Head of caudate nucleus (tissue), 42 donors: ENCODE measurements at regions of chr9 and their contacts with region 1.

Region 1: DNA sequence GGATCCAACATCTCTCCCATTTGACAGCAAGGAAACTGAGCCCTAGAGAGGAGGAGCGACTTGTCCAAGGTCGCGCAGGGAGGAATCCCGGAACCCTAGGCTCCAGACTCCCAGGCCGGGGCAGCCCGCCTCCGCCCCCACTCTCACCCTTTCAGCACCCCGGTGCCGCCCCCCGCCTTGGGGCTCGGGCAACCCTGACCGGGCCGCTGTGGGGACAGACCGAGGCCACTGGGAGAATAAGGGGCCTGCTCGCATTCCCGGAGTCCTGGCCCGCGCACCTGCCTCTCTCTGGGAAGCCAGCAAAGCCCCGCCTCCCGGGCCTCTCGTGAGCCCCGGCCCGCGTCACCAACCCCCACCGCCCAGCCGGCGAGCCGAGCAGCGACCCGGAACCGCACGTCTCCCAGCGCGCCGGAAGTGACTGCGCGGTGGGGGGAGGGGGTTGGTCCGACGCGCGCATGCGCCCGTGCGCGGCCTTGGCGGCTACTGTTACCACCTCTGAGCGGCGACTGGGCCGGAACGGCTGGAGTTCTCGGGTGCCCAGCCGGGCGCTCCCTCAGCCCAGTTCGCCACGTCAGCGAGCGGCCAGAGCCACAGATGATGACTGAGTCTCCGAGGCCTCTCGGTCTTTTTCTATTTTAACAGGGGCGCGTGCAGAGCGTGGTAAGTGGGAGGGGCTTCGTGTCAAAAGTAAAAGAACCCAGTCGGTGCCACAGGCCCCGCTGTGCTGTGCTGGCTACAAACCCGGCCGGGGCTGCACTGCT is at the start of gene GOLGA1:
- DNase-seq: peak; percentile 84 to 97 (median 93)

Region 2: GRCh38 chr9:124868511-124869465 is 72.1 kb before region 1 on chr9:
- intact Hi-C with region 1: loop called (anchors 5 kb)
- DNase-seq: peak; percentile 47 to 95 (median 88)

Region 3: DNA sequence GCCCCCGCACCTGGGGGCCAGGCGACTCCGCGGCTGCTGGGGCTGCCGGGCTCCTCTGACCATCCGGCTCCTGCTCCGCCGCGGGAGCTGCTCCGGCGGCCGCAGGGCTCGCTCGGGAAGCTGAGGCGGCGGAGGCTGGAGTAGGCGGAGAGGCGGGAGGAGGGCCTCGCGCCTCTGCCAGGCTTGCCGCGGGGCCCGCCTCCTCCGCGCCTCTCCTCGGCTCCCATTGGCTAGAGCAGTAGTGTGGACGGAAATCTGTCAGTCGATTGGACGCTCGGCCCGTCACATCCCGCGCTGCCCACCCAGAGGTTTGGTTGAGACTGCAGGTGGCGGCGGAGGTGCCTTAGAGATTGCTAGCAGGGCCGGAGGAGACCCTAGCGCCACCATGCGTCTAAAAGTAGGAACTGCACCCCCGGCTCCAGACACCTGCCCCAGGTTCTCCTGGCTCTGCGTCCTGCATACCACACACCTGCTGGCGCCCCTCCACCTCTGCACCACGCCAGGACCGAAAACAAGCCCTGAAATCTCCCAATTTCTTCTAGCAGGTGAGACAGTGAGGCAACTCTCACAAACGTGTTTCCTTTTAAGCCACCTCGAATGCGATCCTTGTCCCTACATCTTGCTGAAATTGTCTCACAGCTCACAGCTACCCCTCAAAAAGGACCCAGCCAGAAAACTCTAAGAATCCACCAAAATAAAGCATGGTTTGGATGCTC is 202.7 kb after region 1 on chr9 and contains the start of gene SCAI:
- intact Hi-C with region 1: loop called (anchors 2 kb)
- DNase-seq: peak; percentile 98 to 100 (median 99)

Region 4: DNA sequence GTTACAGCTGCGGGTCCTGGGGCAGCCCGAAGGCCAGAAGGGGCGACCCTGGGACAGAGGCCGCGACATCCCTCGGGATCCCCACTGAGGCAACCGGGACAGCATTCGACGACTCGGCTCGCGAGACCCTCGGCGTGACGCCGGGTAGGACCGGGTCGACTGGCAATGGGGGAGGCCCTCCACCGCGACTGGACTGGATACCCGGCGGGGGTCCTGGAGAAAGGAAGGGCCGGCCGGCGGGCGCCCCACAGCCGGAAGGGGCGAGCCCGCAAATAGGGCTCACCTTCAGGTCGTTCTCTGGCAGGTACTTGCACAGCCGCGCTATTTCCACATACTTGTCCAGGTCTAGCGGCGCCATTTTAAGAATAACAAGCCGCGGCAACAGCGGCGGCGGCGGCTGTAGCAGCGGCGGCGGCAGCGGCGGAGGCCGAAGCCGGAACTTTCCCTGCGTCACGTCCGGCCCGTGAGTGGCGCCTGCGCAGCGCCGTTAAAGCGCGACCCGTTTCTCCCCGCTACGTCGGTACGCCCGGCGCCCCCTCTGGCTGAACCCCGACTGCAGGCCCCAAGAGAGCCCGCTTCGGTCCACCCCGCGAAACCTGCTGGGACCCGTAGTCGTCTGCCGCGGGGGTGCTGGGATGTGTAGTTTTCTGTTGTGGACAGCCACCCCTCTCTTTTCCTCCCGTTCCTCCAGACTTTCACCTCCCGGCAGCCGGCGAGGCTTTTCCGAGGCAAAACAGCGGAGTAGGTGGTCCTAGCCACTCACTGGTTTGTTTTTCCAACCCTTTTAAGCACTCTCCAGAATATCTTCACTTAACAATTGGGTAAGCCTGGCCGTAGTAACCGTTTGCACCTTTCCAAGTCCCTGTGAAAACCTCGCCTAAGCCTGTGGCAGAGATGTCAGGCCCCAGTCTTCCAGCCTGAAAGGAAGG is 248.8 kb after region 1 on chr9 and contains the start of gene PPP6C:
- intact Hi-C with region 1: no loop called
- DNase-seq: peak; percentile 95 to 99 (median 99)